Adrenal gland (tissue), 19 donors: ENCODE measurements at regions of chr5 and their contacts with region 1.

Region 1: DNA sequence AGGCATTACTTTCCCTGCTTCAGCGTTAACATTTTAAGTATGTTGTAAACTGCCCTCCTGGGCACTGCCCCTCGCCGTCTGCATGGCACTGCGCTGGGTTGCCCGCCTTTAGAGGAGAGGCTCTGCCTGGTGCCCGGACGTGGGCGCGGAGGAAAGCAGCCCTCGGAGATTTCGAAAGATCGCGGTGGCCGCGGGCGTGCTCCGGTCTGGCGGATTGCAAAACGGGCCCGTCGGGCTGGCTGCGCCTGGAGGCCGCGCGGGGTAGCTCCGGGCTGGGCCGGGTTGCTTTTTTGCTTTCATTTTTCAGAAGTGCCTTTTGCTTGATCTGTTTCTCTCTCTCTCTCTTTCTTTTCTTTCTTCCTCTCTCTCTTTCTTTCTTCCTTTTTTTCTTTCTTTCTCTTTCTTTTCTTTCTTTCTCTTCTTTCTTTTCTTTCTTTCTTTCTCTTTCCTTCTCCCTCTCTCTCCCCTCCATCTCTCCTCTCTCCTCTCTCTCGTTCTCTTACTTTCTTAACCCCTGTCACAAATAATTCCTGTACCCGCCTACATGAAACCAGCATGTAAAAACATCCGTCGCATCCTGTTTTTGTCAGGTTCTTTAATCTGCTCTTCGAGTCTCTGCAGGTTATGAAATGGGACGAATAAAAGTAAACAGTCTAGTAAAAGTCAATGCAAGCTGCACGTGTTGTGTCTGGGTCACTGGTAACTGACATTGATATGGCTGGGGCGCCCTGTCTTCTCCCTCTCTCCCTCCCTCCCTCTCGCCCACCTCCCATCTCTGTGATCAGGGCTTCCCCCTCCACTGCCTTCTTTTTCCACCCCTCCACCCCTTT is 1.7 kb downstream of the FST start:
- DNase-seq: peak; percentile 70 to 85 (median 81)
- H3K4me3 ChIP-seq: peak overlapping the region in 3 of 4 donors; percentile 13 to 82 (median 59)
- H3K27ac ChIP-seq: peak overlapping the region in 2 of 5 donors; percentile 6 to 41
- H3K4me1 ChIP-seq: peaks cover 0 to 17% of the 10 kb centered on the region in 2 donors
- H3K27me3 ChIP-seq: no peaks in the 10 kb centered on the region
- CTCF ChIP-seq: peak; percentile 25 to 70 (median 56)
- POLR2A ChIP-seq: no peak

Region 2: GRCh38 chr5:53343187-53343586 is 138.9 kb before region 1 on chr5:
- intact Hi-C with region 1: no loop called
- DNase-seq: no peak
- H3K4me3 ChIP-seq: no peak overlapping the region
- H3K27ac ChIP-seq: no peak overlapping the region
- H3K4me1 ChIP-seq: no peaks in the 10 kb centered on the region
- H3K27me3 ChIP-seq: no peaks in the 10 kb centered on the region
- CTCF ChIP-seq: no peak
- POLR2A ChIP-seq: no peak

Region 3: DNA sequence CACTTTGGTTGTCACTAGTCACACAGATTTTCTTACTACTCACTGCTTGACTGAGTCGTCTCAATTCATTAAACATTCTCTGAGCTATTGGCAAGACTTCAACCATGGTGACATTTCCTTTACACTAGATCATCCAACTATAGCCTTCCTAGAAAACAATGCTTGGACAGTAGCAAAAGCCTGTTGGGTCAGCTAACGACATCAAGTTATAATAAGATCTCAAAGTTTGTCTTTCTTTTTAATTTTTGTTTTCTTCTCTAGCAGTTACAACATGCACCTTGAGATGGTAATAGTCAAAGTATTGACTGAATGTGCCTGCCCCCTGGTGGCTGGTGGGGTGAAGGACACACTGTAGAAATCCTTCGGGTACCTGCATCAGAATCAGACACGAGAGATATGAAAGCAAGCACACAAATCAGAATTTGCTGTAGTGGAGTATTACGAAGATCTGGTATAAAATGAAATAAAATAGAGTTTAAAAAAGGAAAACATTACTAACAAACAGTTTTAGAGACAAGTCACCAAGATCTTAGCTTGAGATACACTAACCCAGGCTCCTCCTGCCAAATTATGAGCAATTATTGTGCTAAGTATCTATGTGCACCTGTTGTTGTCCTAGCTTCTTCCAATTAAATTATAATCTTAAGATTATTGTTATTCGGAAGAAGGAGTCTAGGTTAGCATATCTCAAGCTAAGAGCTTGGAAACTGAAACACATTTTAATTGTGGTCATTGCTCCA is 747.1 kb after region 1 on chr5:
- intact Hi-C with region 1: loop called in 1 of 2 experiments (anchors 5 kb)
- DNase-seq: peak; percentile 59 to 93 (median 79)
- H3K4me3 ChIP-seq: no peak overlapping the region
- H3K27ac ChIP-seq: no peak overlapping the region
- H3K4me1 ChIP-seq: peaks cover 0 to 5% of the 10 kb centered on the region in 2 donors
- H3K27me3 ChIP-seq: no peaks in the 10 kb centered on the region
- CTCF ChIP-seq: peak; percentile 80 to 95 (median 86)
- POLR2A ChIP-seq: no peak